Left cardiac atrium (tissue), 4 donors: ENCODE measurements at regions of chr1 and their contacts with region 1.

Region 1: GRCh38 chr1:217647791-217648190 is 16.6 kb downstream of the SPATA17 start:
- DNase-seq: no peak
- ATAC-seq: no peak

Region 2: DNA sequence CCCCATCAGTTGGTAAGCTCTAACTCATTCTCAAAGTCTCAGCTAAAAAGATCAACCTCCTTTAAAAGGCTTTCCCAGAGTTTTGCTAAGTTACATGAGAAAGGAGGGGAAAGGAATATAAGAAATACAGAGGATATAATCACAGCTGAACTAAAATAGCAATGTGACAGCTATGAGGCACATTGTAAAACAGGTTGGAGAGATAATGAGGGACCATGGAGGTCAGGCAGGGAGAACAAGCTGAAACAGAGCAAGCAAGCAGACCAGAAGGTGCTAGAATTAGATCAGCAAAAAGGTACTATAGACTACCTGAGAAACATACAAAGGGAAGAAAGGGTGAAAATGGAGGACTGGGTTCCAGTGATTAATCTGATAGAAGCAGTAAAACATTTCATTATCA is 45.4 kb before region 1 on chr1:
- intact Hi-C with region 1: loop called in 1 of 2 experiments (anchors 2 kb)
- DNase-seq: no peak
- ATAC-seq: no peak